B cell (primary cell): ENCODE measurements at regions of chr19 and their contacts with region 1.

Region 1: GRCh38 chr19:7943444-7944176 is at the start of gene TIMM44:
- DNase-seq: peak; percentile 99
- ATAC-seq: peak; percentile 96
- H3K4me3 ChIP-seq: peak within 1 kb of the TSS; percentile 81 to 97 (median 87)
- H3K4me3 Mint-ChIP-seq: peak within 1 kb of the TSS; percentile 96
- H3K27ac ChIP-seq: peak within 1 kb of the TSS; percentile 94 to 99
- H3K27ac Mint-ChIP-seq: peak within 1 kb of the TSS; percentile 97
- H3K4me1 ChIP-seq: peaks cover 12 to 21% of the 10 kb centered on the region in 2 donors
- H3K4me1 Mint-ChIP-seq: peaks cover 30% of the 10 kb centered on the region
- H3K27me3 ChIP-seq: no peaks in the 10 kb centered on the region
- H3K27me3 Mint-ChIP-seq: no peaks in the 10 kb centered on the region
- CTCF ChIP-seq: no peak
- total RNA-seq, gene TIMM44: 62.1 and 66.5 TPM in 2 replicates

Region 2: GRCh38 chr19:7629347-7630054 is 314.1 kb before region 1 on chr19 and contains the starts of genes PET100 and XAB2:
- CTCF ChIA-PET with region 1: interaction called, 5 read pairs
- POLR2A ChIA-PET with region 1: interaction called, 6 read pairs
- intact Hi-C with region 1: loop called (anchors 1 kb)
- DNase-seq: peak; percentile 99
- ATAC-seq: peak; percentile 96
- H3K4me3 ChIP-seq: peak within 1 kb of the TSS; percentile 78 to 100 (median 99)
- H3K4me3 Mint-ChIP-seq: peak within 1 kb of the TSS; percentile 92
- H3K27ac ChIP-seq: peak within 1 kb of the TSS; percentile 87 to 91
- H3K27ac Mint-ChIP-seq: peak within 1 kb of the TSS; percentile 95
- H3K4me1 ChIP-seq: peaks cover 19 to 31% of the 10 kb centered on the region in 2 donors
- H3K4me1 Mint-ChIP-seq: peaks cover 43% of the 10 kb centered on the region
- H3K27me3 ChIP-seq: no peaks in the 10 kb centered on the region
- H3K27me3 Mint-ChIP-seq: no peaks in the 10 kb centered on the region
- CTCF ChIP-seq: no peak
- total RNA-seq, gene PET100: 89.1 and 100 TPM in 2 replicates
- total RNA-seq, gene XAB2: 62.7 and 64.2 TPM in 2 replicates

Region 3: DNA sequence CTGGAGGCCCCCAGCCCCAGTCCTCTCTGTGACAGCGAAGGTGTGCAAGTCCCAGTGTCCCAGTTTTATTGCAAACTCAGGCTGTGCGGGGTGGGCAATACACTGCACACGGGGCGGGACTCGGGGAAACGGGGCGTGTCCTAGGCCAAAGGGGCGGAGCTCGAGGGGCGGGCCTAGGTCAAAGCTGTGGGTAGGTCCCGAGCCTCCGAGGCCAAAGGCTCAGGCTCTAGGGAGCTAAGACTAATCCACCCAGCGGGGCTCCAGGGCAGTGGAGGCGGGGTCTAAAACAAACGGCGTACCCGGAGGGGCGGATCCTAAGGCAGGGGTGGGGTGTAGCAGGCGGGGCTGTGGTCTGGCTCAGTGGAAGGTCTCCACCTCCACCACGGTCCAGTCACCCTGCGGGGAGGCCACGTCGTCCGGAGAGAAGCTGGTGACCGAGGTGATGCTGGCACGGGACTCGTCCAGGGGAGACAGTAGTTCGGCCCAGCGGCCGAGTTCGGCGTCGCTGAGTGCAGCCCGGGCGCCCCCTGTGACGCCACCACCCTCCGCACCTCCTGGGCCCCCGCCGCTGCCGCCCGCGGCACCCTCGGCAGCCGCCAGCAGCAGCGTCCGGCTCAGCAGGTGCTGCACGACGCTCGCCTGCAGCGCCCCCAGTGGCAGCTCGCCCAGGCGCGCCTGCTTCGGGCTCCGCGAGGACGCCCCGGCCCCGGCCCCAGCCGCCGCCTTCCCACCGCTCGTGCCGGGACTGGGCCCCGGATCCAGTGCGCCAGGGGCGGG is 74.7 kb before region 1 on chr19:
- CTCF ChIA-PET with region 1: interaction called, 5 read pairs
- POLR2A ChIA-PET with region 1: interaction called, 5 read pairs
- intact Hi-C with region 1: loop called (anchors 2 kb)
- DNase-seq: peak; percentile 94
- ATAC-seq: peak; percentile 71
- H3K4me3 ChIP-seq: peak overlapping the region in 4 of 5 experiments; percentile 48 to 63 (median 56)
- H3K4me3 Mint-ChIP-seq: peak overlapping the region; percentile 86
- H3K27ac ChIP-seq: peak overlapping the region; percentile 29 to 48
- H3K27ac Mint-ChIP-seq: peak overlapping the region; percentile 65
- H3K4me1 ChIP-seq: peaks cover 40 to 47% of the 10 kb centered on the region in 2 donors
- H3K4me1 Mint-ChIP-seq: peaks cover 37% of the 10 kb centered on the region
- H3K27me3 ChIP-seq: peaks cover 0 to 82% (median 25%) of the 10 kb centered on the region in 4 experiments
- H3K27me3 Mint-ChIP-seq: peaks cover 32% of the 10 kb centered on the region
- CTCF ChIP-seq: peak; percentile 95

Region 4: DNA sequence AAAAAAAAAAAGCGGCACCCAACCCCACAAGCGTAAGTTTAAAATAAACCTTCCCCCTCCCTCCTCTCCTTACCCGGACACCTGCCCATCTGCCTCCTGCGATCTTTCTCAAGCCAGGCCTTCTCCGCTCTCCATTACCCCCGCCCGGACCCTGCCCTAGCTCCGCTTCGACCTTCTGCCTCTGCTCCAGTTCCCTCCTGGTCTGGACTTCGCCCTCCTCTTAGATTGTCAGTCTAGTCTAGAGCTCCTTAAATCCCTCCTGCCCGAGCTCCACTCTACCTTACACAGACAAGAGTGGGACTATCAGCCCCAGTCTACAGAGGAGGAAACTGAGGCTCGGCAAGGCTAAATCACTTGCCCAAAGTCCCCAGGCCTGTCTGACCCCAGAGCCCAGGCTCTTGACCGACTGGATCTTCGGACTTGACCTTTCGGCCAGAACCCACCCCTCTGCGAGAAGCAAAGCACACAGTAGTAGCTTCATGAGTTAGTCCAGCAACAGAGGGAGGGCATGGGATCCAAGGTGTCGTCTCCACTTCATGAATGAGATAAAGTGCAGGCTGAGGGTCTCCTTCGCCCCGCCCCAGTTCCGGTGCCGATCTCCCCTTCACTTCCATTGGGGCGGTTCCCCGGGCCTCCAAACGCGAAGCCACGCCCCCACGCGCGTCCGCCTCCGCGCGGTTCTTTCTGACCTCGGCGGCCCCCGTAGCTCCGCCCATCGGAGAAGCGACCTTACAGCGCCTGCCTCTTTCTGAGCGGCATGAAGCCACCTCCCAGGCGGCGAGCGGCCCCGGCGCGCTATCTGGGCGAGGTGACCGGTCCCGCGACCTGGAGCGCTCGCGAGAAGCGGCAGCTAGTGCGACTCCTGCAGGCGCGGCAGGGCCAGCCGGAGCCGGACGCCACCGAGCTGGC is 23.7 kb before region 1 on chr19 and contains the start of gene SNAPC2:
- CTCF ChIA-PET with region 1: interaction called, 28 read pairs
- POLR2A ChIA-PET with region 1: interaction called, 29 read pairs
- intact Hi-C with region 1: loop called (anchors 1 kb)
- DNase-seq: peak; percentile 99
- ATAC-seq: peak; percentile 56
- H3K4me3 ChIP-seq: peak within 1 kb of the TSS; percentile 55 to 84 (median 75)
- H3K4me3 Mint-ChIP-seq: peak within 1 kb of the TSS; percentile 95
- H3K27ac ChIP-seq: peak within 1 kb of the TSS; percentile 73 to 74
- H3K27ac Mint-ChIP-seq: peak within 1 kb of the TSS; percentile 96
- H3K4me1 ChIP-seq: peaks cover 57 to 61% of the 10 kb centered on the region in 2 donors
- H3K4me1 Mint-ChIP-seq: peaks cover 48% of the 10 kb centered on the region
- H3K27me3 ChIP-seq: peaks cover 0 to 42% (median 24%) of the 10 kb centered on the region in 4 experiments
- H3K27me3 Mint-ChIP-seq: peaks cover 22% of the 10 kb centered on the region
- CTCF ChIP-seq: no peak
- total RNA-seq, gene SNAPC2: 19.3 and 19.9 TPM in 2 replicates

Region 5: DNA sequence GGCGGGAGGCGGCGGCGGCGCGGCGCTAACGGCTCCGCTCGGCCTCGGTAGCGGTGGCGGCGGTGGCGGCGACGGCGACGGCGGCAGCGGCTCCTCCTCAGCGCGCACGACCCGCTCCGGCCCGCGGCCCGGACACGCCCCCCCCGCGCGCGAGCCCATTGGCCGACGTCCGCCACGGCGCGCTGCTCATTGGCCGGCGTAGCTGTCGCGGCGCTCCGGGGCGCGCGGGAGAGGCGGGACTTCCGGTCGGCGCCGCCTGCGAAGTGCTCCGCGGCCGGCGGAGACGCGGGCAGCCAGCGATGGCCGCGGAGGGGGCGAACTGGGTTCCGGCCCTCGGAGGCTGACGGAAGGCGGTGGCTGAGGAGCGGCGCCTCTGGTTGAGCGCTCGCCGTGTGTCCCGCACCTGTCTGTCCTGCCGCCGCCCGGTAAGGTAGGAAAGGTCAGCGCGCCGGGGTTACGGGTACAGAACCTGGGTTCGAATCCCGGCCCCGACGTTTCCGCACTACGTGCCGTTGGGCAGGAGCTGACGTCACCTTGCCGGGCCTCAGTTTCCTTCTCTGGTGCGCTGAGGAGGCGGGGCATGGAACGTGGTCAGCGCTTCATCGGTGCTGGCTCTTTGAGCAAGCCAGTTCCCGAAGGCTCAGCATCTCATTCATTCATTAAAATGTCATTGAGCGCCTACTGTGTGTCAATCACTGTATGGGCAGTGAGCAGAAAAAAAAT is 62.1 kb after region 1 on chr19 and contains the start of gene ELAVL1:
- CTCF ChIA-PET with region 1: interaction called, 18 read pairs
- POLR2A ChIA-PET with region 1: interaction called, 5 read pairs
- intact Hi-C with region 1: loop called (anchors 1 kb)
- DNase-seq: peak; percentile 93
- ATAC-seq: peak; percentile 92
- H3K4me3 ChIP-seq: peak within 1 kb of the TSS; percentile 74 to 88 (median 86)
- H3K4me3 Mint-ChIP-seq: peak within 1 kb of the TSS; percentile 95
- H3K27ac ChIP-seq: peak within 1 kb of the TSS; percentile 62 to 87
- H3K27ac Mint-ChIP-seq: peak within 1 kb of the TSS; percentile 85
- H3K4me1 ChIP-seq: peaks cover 25 to 42% of the 10 kb centered on the region in 2 donors
- H3K4me1 Mint-ChIP-seq: peaks cover 37% of the 10 kb centered on the region
- H3K27me3 ChIP-seq: no peaks in the 10 kb centered on the region
- H3K27me3 Mint-ChIP-seq: no peaks in the 10 kb centered on the region
- CTCF ChIP-seq: no peak
- total RNA-seq, gene ELAVL1: 58.3 and 63.5 TPM in 2 replicates

Region 6: DNA sequence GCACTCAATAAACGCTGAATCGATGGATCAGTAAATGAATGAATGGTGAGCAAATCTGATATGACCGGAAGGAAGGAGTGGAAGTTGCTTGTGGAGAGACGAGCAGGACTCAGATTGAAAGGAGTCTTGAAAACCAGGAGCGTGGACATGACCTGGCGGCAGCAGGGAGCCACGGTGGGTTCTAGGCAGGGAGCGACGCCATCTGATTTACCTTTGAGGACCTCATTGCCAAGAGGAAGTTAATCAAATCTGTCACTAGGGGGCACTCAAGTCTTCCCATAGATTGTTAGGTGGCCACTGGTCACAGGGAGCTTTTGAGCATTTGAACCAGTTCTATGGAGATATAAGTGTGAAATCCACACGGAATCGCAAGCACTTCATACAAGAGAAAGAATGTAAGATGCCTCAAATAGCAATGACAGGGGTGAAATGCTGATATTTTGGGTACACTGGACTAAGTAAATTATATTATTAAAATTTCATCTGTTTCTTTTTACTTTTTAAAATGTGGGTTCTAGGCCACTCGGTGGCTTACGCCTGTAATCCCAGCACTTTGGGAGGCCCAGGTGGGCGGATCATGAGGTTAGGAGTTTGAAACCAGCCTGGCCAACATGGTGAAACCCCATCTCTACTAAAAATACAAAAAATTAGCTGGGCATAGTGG is 214.9 kb after region 1 on chr19:
- CTCF ChIA-PET with region 1: interaction called, 10 read pairs
- POLR2A ChIA-PET with region 1: no interaction called
- intact Hi-C with region 1: no loop called
- DNase-seq: peak; percentile 87
- ATAC-seq: peak; percentile 65
- H3K4me3 ChIP-seq: no peak overlapping the region
- H3K4me3 Mint-ChIP-seq: peak overlapping the region; percentile 33
- H3K27ac ChIP-seq: no peak overlapping the region
- H3K27ac Mint-ChIP-seq: peak overlapping the region; percentile 73
- H3K4me1 ChIP-seq: peaks cover 6 to 15% of the 10 kb centered on the region in 2 donors
- H3K4me1 Mint-ChIP-seq: peaks cover 24% of the 10 kb centered on the region
- H3K27me3 ChIP-seq: peaks cover 0 to 14% (median 2%) of the 10 kb centered on the region in 4 experiments
- H3K27me3 Mint-ChIP-seq: peaks cover 14% of the 10 kb centered on the region
- CTCF ChIP-seq: peak; percentile 82

Region 7: GRCh38 chr19:8321060-8321985 is 377.7 kb after region 1 on chr19 and contains the starts of genes NDUFA7 and RPS28:
- CTCF ChIA-PET with region 1: no interaction called
- POLR2A ChIA-PET with region 1: no interaction called
- intact Hi-C with region 1: loop called (anchors 1 kb)
- DNase-seq: peak; percentile 98
- ATAC-seq: peak; percentile 96
- H3K4me3 ChIP-seq: peak within 1 kb of the TSS; percentile 78 to 99 (median 96)
- H3K4me3 Mint-ChIP-seq: peak within 1 kb of the TSS; percentile 92
- H3K27ac ChIP-seq: peak within 1 kb of the TSS; percentile 80 to 92
- H3K27ac Mint-ChIP-seq: peak within 1 kb of the TSS; percentile 91
- H3K4me1 ChIP-seq: peaks cover 18 to 39% of the 10 kb centered on the region in 2 donors
- H3K4me1 Mint-ChIP-seq: peaks cover 42% of the 10 kb centered on the region
- H3K27me3 ChIP-seq: no peaks in the 10 kb centered on the region
- H3K27me3 Mint-ChIP-seq: no peaks in the 10 kb centered on the region
- CTCF ChIP-seq: peak; percentile 41
- total RNA-seq, gene NDUFA7: 23.2 and 28.6 TPM in 2 replicates
- total RNA-seq, gene RPS28: 2,435 and 2,579 TPM in 2 replicates